HEK293 (cell line): ENCODE measurements at regions of chr12 and their contacts with region 1.

Region 1: DNA sequence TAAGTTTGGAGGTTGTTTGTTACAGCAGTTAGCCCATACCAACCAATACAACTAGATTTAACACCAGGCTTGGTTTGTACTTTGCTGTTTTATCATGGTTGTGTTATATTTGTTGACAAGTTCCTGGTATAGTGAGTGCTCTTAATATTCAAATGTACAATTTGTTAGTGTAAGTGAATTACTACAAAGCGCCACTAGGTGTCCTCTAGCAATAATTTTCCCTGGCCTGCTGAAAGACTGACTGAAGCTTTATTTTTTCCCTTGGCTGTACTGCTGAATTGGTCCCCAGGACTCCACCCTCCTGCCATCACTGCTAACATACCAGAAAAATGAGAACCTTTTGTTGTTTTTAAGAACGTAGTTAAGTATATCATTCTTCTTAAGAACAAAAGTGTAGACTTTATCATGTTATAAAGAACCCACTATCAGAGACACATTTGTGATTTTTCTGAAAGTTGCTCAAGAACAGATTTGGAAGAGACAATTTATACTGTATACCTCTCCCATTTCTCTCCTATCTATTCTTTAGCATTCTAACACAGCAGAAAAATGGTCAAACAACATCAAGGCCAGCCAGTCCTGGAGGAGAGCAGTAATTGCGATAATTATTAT is 75.3 kb upstream of the FAR2 start:
- H3K4me3 ChIP-seq: no peak overlapping the region
- H3K27ac ChIP-seq: no peak overlapping the region
- H3K4me1 ChIP-seq: no peaks in the 10 kb centered on the region
- CTCF ChIP-seq: no peak

Region 2: GRCh38 chr12:29088611-29089219 is 15.0 kb after region 1 on chr12:
- CTCF ChIA-PET with region 1: interaction called, 15 read pairs
- POLR2A ChIA-PET with region 1: no interaction called
- H3K4me3 ChIP-seq: no peak overlapping the region
- H3K27ac ChIP-seq: no peak overlapping the region
- H3K4me1 ChIP-seq: no peaks in the 10 kb centered on the region
- CTCF ChIP-seq: no peak

Region 3: DNA sequence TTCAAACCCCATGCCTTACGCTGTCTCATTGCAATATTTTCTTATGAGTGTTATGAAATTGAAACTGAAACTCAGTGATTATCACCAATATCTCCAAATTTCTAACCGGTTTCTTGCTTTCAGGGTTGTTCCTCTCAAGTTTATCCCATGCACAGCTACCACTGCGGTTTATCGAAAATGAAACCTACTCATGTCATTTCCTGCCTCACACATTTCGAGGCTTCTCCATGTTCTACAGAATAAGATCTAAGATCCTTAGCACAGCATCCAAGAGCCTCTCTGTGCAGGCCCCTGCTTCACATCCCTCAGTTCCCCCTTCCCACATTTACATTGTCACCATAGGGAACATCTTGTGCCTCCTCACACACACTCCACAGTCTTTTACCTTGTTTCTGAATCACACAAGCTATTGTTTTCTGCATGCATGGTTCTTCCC is 29.8 kb after region 1 on chr12:
- CTCF ChIA-PET with region 1: no interaction called
- POLR2A ChIA-PET with region 1: no interaction called
- H3K4me3 ChIP-seq: no peak overlapping the region
- H3K27ac ChIP-seq: no peak overlapping the region
- H3K4me1 ChIP-seq: no peaks in the 10 kb centered on the region
- CTCF ChIP-seq: no peak